CD4-positive, alpha-beta T cell (primary cell): ENCODE measurements at regions of chr14 and their contacts with region 1.

Region 1: DNA sequence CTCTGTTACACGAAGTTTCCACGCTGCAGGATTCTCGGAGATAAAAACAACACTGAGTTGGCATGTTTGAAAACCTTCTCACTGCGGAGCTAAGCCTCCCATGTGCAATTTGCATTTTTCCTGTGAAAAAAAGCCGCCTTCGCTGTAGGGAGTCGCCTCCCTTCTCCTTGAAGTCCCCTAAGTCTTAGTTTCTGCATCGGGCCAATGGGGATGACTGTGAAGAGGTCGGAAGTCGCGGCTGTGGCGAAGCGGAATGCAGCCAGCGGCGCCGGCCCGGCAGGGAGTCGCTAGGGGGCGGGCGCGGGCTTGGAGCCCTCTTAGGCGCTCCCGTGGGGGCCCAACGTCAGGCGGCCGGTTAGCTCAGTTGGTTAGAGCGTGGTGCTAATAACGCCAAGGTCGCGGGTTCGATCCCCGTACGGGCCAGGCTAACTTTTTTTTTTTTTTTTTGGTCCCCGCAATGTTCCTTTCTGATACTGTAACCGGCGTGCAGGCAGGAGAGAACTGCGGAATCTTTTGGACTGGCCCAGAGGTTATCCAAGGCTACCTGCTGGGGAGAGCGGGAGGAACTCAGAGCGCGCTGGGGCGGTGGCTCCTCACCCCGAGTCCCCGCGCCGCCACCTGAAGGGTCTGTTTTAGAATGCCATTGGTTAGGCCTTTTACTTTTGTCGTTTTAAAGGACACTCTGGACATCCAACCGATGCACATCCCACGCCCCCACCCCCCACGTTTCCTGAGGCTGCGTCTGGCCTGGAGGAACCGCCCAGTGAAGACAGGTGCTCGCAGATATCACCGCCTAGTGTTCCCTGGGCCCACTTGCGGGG is 2.6 kb upstream of the ZNF839 start:
- DNase-seq: peak; percentile 85 to 99 (median 96)
- ATAC-seq: peak; percentile 55
- H3K4me3 ChIP-seq: peak overlapping the region; percentile 72
- H3K4me3 Mint-ChIP-seq: peak overlapping the region; percentile 100
- H3K27ac ChIP-seq: peak overlapping the region; percentile 43 to 70
- H3K27ac Mint-ChIP-seq: peak overlapping the region; percentile 100
- H3K4me1 ChIP-seq: peaks cover 66% of the 10 kb centered on the region
- H3K4me1 Mint-ChIP-seq: peaks cover 62% of the 10 kb centered on the region
- H3K27me3 ChIP-seq: no peaks in the 10 kb centered on the region
- H3K27me3 Mint-ChIP-seq: peaks cover 11% of the 10 kb centered on the region
- CTCF ChIP-seq: peak; percentile 79

Region 2: DNA sequence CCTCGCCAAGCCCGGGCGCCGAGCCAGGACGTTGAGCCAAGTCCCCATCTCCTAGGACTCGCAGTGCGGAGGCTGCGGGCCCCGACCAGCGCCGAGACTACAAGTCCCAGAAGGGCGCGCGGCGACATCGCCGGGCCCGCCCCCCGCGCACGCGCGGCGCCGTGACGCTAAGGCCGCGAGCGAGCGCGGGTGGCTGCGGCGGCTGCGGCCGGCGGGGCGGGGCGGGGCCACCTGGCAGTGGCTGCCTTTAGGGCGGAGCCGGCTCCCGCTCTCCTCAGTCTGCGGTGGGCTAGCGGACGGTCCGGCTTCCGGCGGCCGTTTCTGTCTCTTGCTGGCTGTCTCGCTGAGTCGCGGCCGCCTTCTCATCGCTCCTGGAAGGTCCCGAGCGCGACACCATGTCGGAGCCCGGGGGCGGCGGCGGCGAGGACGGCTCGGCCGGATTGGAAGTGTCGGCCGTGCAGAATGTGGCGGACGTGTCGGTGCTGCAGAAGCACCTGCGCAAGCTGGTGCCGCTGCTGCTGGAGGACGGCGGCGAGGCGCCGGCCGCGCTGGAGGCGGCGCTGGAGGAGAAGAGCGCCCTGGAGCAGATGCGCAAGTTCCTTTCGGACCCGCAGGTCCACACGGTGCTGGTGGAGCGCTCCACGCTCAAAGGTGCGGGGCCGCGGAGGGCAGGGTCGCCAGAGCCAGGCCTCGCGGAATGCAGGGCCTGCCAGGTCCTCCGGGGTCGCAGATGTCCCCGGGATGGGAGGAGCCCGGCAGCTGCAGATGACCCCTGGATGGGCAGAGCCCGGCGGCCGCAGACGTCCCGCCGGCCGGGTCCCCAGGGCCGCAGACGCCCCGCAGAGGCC is 352.4 kb before region 1 on chr14 and contains the start of gene DYNC1H1:
- CTCF ChIA-PET with region 1: interaction called, 3 read pairs
- POLR2A ChIA-PET with region 1: interaction called, 4 read pairs
- intact Hi-C with region 1: loop called (anchors 2 kb)
- DNase-seq: peak; percentile 75 to 96 (median 86)
- ATAC-seq: peak; percentile 83
- H3K4me3 ChIP-seq: peak within 1 kb of the TSS; percentile 86
- H3K4me3 Mint-ChIP-seq: peak within 1 kb of the TSS; percentile 93
- H3K27ac ChIP-seq: peak within 1 kb of the TSS; percentile 68 to 82
- H3K27ac Mint-ChIP-seq: peak within 1 kb of the TSS; percentile 85
- H3K4me1 ChIP-seq: peaks cover 44% of the 10 kb centered on the region
- H3K4me1 Mint-ChIP-seq: peaks cover 53% of the 10 kb centered on the region
- H3K27me3 ChIP-seq: no peaks in the 10 kb centered on the region
- H3K27me3 Mint-ChIP-seq: no peaks in the 10 kb centered on the region
- CTCF ChIP-seq: no peak
- total RNA-seq, gene DYNC1H1: 286 to 293 TPM

Region 3: DNA sequence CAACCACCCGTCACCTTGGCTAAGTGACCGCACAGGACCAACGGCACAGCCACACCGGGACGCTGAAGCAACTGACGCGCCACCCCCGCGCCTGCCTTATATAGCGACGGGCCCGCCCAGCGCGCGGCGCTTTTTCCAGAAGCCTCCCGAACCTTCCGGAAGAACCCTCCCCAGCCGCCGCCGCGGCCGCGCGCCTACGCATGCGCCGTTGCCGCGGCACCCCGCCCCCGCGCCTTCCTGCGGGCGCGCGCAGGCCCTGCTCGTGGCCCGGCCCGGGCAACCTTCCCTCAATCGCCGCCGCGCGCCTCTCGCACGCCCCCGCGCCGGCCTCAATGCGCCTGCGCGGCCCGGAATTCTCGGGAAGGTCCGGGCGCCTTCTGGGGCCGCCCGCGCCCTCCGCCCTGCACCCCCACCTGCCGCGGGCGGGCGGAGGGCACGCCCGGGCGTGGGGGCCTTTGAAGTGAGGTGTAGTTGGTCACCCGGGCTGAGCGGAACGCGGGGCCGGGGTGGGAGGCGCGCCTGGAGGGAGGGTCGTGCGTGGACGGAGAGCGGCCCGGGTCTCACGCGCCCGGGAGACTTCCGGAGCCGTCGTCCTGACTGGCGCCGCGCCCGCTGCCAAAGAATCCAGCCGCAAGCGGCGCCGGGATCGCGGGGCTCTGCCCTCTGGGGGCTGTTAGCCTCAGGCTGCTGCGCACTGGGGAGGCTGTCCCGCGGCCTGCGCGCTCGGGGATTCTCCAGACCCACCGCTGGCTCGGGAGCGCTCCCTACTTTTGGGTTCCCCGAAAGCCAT is 229.8 kb before region 1 on chr14 and contains the start of gene HSP90AA1:
- CTCF ChIA-PET with region 1: interaction called, 3 read pairs
- POLR2A ChIA-PET with region 1: interaction called, 3 read pairs
- intact Hi-C with region 1: loop called in 1 of 2 experiments (anchors 2 kb)
- DNase-seq: peak; percentile 88 to 98 (median 94)
- ATAC-seq: peak; percentile 77
- H3K4me3 ChIP-seq: peak within 1 kb of the TSS; percentile 74
- H3K4me3 Mint-ChIP-seq: peak within 1 kb of the TSS; percentile 98
- H3K27ac ChIP-seq: peak within 1 kb of the TSS; percentile 95 to 98
- H3K27ac Mint-ChIP-seq: peak within 1 kb of the TSS; percentile 91
- H3K4me1 ChIP-seq: peaks cover 51% of the 10 kb centered on the region
- H3K4me1 Mint-ChIP-seq: peaks cover 64% of the 10 kb centered on the region
- H3K27me3 ChIP-seq: no peaks in the 10 kb centered on the region
- H3K27me3 Mint-ChIP-seq: no peaks in the 10 kb centered on the region
- CTCF ChIP-seq: no peak
- total RNA-seq, gene HSP90AA1: 451 to 462 TPM

Region 4: DNA sequence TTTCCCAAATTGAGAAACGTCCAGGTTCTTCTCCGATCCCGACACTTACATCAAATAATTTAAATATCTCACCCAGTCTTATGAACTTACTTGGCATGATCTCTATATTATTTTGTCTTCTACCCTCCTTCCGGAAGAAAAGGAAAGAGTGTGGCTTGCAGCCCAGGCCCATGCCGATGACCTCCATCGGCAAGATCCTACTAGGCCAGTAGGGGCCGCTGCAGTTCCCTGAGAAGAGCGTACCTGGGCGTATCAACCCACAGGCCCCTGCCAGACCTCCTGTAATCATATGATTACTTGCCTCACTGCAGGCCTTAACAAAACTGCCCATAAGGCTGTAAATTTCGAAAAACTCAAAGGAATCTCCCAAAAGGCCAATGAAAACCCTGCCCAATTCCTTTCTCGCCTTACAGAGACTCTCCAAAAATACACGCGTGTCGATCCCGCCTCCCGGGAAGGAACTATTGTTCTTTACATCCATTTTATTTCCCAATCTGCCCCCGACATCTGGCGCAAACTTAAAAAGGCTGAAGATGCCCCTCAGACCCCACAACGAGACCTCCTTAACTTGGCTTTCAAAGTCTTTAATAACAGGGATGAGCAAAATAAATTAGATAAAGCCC is 81.6 kb before region 1 on chr14:
- CTCF ChIA-PET with region 1: interaction called, 16 read pairs
- POLR2A ChIA-PET with region 1: no interaction called
- intact Hi-C with region 1: loop called (anchors 1 kb)
- DNase-seq: peak; percentile 57 to 84 (median 68)
- ATAC-seq: peak; percentile 98
- H3K4me3 ChIP-seq: no peak overlapping the region
- H3K4me3 Mint-ChIP-seq: no peak overlapping the region
- H3K27ac ChIP-seq: no peak overlapping the region
- H3K27ac Mint-ChIP-seq: no peak overlapping the region
- H3K4me1 ChIP-seq: peaks cover 6% of the 10 kb centered on the region
- H3K4me1 Mint-ChIP-seq: no peaks in the 10 kb centered on the region
- H3K27me3 ChIP-seq: peaks cover 0 to 4% of the 10 kb centered on the region in 2 experiments
- H3K27me3 Mint-ChIP-seq: no peaks in the 10 kb centered on the region
- CTCF ChIP-seq: peak; percentile 77

Region 5: GRCh38 chr14:102304611-102305509 is 12.1 kb before region 1 on chr14 and contains the start of gene MOK:
- CTCF ChIA-PET with region 1: interaction called, 32 read pairs
- POLR2A ChIA-PET with region 1: interaction called, 12 read pairs
- intact Hi-C with region 1: loop called (anchors 1 to 2 kb)
- DNase-seq: peak; percentile 93 to 99 (median 96)
- ATAC-seq: peak; percentile 91
- H3K4me3 ChIP-seq: peak within 1 kb of the TSS; percentile 81
- H3K4me3 Mint-ChIP-seq: peak within 1 kb of the TSS; percentile 95
- H3K27ac ChIP-seq: peak within 1 kb of the TSS; percentile 57 to 77
- H3K27ac Mint-ChIP-seq: peak within 1 kb of the TSS; percentile 91
- H3K4me1 ChIP-seq: peaks cover 12% of the 10 kb centered on the region
- H3K4me1 Mint-ChIP-seq: peaks cover 6% of the 10 kb centered on the region
- H3K27me3 ChIP-seq: no peaks in the 10 kb centered on the region
- H3K27me3 Mint-ChIP-seq: peaks cover 5% of the 10 kb centered on the region
- CTCF ChIP-seq: no peak
- total RNA-seq, gene MOK: 2.3 to 2.5 TPM

Region 6: DNA sequence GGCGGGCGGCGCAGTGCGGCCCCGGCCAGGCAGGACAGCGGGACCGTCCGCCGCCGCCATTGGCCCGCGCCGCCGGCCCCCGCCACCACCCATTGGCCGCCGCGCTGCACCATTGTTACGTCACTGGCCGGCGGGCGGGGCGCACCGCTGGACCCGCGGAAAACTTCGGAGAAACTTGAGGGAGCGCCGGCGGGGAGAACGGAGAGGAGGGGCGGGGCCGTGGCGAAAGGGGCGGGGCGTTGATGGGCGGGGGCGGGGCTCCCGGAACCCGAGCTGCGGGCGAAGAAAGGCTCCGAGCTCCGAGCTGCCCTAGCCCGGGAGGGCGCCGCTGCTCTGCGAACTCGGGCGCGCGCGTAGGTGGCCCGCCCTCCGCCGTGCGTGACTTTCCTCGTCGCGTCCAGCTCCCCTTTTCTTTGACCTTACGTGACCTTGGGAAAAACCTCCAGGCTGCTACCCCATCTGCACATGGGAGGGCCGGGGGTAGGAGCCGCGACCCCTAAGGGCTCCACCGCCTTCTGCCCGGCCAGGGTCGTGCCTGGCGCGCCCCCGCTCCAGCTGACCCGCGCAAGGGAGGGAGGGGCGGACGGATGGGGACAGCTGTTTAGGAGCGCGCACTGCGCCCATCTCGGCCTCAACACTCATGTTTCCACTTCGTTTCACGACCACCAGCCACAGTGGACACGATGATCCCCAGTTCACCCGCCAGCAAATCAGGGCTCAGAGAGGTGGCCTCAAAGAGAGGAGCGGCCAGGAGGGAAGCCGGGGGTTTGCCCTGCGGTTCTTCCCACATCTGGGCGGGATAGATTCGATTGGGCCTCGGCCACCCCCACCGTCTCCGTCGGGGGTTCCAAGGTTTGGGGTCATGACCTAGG is 193.0 kb after region 1 on chr14 and contains the start of gene ANKRD9:
- CTCF ChIA-PET with region 1: no interaction called
- POLR2A ChIA-PET with region 1: no interaction called
- intact Hi-C with region 1: loop called in 1 of 2 experiments (anchors 10 kb)
- DNase-seq: peak; percentile 59 to 95 (median 82)
- ATAC-seq: peak; percentile 81
- H3K4me3 ChIP-seq: peak within 1 kb of the TSS; percentile 74
- H3K4me3 Mint-ChIP-seq: peak within 1 kb of the TSS; percentile 92
- H3K27ac ChIP-seq: peak within 1 kb of the TSS in 1 of 2 donors; percentile 34
- H3K27ac Mint-ChIP-seq: peak within 1 kb of the TSS; percentile 62
- H3K4me1 ChIP-seq: peaks cover 25% of the 10 kb centered on the region
- H3K4me1 Mint-ChIP-seq: peaks cover 18% of the 10 kb centered on the region
- H3K27me3 ChIP-seq: no peaks in the 10 kb centered on the region
- H3K27me3 Mint-ChIP-seq: no peaks in the 10 kb centered on the region
- CTCF ChIP-seq: no peak
- total RNA-seq, gene ANKRD9: 4.4 to 5.5 TPM

Region 7: DNA sequence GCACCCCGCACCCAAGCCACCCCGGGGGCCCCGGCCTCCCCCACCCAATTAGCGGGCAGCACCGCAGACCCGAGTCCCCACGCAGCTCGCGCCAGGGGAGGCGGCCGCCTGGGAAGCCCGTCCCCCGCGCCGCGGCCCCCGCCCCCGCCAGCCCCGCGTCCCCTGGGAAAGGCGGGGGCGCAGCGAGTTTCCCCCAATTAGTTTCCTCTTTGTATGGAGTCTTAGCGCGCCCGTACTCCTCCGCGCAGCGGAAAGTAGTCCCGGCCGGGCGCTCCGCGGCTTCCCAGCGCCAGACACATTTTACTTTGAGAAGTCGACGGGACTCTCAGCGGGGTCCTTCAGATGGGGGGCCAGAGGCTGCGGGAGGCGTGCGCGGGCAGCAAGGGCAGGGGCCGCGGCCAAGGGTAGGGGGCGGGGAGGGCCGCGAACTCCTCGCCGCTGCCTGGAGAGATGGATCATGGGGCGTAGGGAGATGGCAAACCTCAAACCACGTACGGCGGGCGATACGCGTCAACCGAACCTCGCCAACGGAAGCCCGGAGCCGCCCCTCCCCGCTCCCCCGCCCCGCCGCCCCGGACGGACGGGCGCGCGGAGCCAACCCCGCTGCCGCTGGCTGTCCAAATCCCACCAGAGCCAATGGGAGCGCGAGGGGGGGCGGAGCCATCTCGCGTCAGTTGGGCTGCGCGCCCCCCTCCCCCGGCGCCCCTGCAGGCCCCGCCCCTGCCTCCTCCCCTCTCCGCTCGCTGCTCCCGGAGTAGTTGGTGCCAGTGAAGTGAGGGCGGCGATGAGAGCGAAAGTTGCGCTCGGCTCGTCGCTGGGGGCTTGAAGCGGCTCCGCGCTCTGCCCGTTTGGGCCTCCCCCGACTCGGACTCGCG is 275.2 kb after region 1 on chr14 and contains the start of gene RCOR1:
- CTCF ChIA-PET with region 1: no interaction called
- POLR2A ChIA-PET with region 1: no interaction called
- intact Hi-C with region 1: loop called in 1 of 2 experiments (anchors 5 kb)
- DNase-seq: peak; percentile 97 to 99 (median 98)
- ATAC-seq: peak; percentile 88
- H3K4me3 ChIP-seq: peak within 1 kb of the TSS; percentile 77
- H3K4me3 Mint-ChIP-seq: peak within 1 kb of the TSS; percentile 99
- H3K27ac ChIP-seq: peak within 1 kb of the TSS; percentile 86 to 88
- H3K27ac Mint-ChIP-seq: peak within 1 kb of the TSS; percentile 95
- H3K4me1 ChIP-seq: peaks cover 25% of the 10 kb centered on the region
- H3K4me1 Mint-ChIP-seq: peaks cover 30% of the 10 kb centered on the region
- H3K27me3 ChIP-seq: no peaks in the 10 kb centered on the region
- H3K27me3 Mint-ChIP-seq: no peaks in the 10 kb centered on the region
- CTCF ChIP-seq: no peak
- total RNA-seq, gene RCOR1: 20.5 to 23.1 TPM